Endothelial cell of umbilical vein (primary cell): ENCODE measurements at regions of chr17 and their contacts with region 1.

Region 1: GRCh38 chr17:42517516-42517915 is 18.5 kb upstream of the NAGLU start:
- DNase-seq: peak; percentile 90
- H3K4me3 ChIP-seq: no peak overlapping the region
- H3K27ac ChIP-seq: peak overlapping the region; percentile 100
- H3K4me1 ChIP-seq: peaks cover 51% of the 10 kb centered on the region
- H3K27me3 ChIP-seq: no peaks in the 10 kb centered on the region
- CTCF ChIP-seq: peak; percentile 92 to 98
- POLR2A ChIP-seq: peak; percentile 54

Region 2: GRCh38 chr17:42312285-42313130 is 205.0 kb before region 1 on chr17:
- CTCF ChIA-PET with region 1: interaction called, 190 read pairs
- POLR2A ChIA-PET with region 1: interaction called, 5 read pairs
- dilution Hi-C with region 1: no loop called
- intact Hi-C with region 1: loop called (anchors 1 kb)
- DNase-seq: peak; percentile 85
- H3K4me3 ChIP-seq: no peak overlapping the region
- H3K27ac ChIP-seq: no peak overlapping the region
- H3K4me1 ChIP-seq: peaks cover 43% of the 10 kb centered on the region
- H3K27me3 ChIP-seq: no peaks in the 10 kb centered on the region
- CTCF ChIP-seq: peak; percentile 67 to 88
- POLR2A ChIP-seq: no peak

Region 3: GRCh38 chr17:42337442-42337841 is 180.1 kb before region 1 on chr17:
- CTCF ChIA-PET with region 1: interaction called, 9 read pairs
- POLR2A ChIA-PET with region 1: no interaction called
- dilution Hi-C with region 1: loop called (anchors 25 kb)
- intact Hi-C with region 1: no loop called
- DNase-seq: no peak
- H3K4me3 ChIP-seq: no peak overlapping the region
- H3K27ac ChIP-seq: no peak overlapping the region
- H3K4me1 ChIP-seq: peaks cover 14% of the 10 kb centered on the region
- H3K27me3 ChIP-seq: no peaks in the 10 kb centered on the region
- CTCF ChIP-seq: no peak
- POLR2A ChIP-seq: no peak

Region 4: DNA sequence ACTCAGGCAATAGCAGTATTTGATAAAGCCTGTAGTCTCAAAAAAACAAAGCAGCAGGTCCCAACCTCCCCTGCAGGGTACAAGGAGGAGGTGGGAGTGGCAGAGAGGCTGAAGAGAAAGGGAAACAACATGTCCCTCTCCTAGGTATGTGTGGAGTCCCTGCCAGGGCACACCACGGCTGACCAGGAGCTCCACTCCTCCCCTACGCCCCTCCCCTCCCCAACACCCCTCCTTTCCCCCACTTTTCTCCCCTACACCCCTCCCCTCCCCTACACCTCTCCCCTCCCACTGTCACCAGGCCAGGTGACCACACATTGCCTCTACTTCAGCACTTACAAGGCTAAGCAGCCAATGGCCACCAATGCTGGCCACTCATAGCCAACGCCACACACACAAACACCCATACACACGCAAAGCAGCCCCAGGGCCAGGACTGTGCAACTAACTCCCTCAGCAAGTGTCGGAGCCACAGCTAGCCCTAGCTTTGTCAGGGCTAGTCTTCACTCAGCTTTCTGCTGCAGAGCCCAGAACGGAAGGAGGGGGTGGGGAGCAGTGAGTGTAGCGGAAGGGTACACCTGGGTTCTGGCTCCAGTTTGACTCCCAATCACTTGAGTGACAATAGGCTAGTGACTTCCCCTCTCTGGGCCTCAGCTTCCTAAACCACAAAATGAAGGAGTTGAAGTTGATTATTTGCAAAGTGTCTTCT is 102.7 kb before region 1 on chr17:
- CTCF ChIA-PET with region 1: interaction called, 81 read pairs
- POLR2A ChIA-PET with region 1: interaction called, 16 read pairs
- dilution Hi-C with region 1: no loop called
- intact Hi-C with region 1: no loop called
- DNase-seq: peak; percentile 24
- H3K4me3 ChIP-seq: no peak overlapping the region
- H3K27ac ChIP-seq: peak overlapping the region; percentile 24
- H3K4me1 ChIP-seq: peaks cover 62% of the 10 kb centered on the region
- H3K27me3 ChIP-seq: no peaks in the 10 kb centered on the region
- CTCF ChIP-seq: no peak
- POLR2A ChIP-seq: no peak

Region 5: DNA sequence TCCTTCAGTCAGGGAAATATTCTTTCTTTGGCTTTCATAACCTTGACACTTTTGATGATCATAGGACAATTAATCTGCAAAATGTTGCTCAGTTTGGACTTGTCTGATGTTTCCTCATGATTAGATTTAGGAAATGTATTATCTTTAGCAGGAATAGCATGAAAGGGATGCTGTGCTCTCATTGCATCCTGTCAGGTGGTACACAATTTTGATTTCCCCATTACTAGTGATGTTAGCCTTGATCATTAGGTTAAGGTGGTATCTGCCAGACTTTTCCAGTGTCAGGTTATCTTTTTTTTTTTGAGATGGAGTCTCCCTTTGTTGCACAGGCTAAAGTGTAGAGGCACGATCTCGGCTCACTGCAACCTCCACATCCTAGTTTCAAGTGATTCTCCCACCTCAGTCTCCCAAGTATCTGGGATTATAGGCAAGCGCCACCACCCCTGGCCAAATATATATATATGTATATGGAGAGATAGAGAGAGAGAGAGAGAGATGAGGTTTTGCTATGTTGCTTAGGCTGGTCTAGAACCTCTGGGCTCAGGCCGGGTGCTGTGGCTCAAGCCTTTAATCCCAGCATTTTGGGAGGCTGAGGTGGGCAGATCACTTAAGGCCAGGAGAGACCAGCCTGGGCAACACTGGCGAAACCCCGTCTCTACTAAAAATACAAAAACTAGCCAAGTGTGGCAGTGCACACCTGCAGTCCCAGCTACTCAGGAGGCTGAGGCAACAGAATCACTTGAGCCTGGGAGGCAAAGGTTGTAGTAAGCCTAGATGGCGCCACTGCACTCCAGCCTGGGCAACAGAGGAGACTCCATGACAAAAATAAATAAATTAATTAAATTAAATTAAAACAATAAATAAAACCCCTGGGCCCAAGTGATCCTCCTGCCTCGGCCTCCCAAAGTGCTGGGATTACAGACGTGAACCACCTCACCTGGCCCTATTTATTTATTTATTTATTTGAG is 78.6 kb before region 1 on chr17:
- CTCF ChIA-PET with region 1: interaction called, 14 read pairs
- POLR2A ChIA-PET with region 1: no interaction called
- dilution Hi-C with region 1: no loop called
- intact Hi-C with region 1: no loop called
- DNase-seq: peak; percentile 40
- H3K4me3 ChIP-seq: no peak overlapping the region
- H3K27ac ChIP-seq: no peak overlapping the region
- H3K4me1 ChIP-seq: peaks cover 8% of the 10 kb centered on the region
- H3K27me3 ChIP-seq: no peaks in the 10 kb centered on the region
- CTCF ChIP-seq: peak; percentile 26 to 58
- POLR2A ChIP-seq: no peak

Region 6: DNA sequence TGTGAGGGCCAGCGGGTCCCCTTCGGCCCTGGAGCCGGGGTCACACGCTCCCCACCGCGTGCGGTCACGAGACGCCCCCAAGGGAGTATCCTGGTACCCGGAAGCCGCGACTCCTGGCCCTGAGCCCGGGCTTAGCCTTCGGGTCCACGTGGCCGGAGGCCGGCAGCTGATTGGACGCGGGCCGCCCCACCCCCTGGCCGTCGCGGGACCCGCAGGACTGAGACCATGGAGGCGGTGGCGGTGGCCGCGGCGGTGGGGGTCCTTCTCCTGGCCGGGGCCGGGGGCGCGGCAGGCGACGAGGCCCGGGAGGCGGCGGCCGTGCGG is 18.5 kb after region 1 on chr17 and contains the start of gene NAGLU:
- CTCF ChIA-PET with region 1: interaction called, 13 read pairs
- POLR2A ChIA-PET with region 1: interaction called, 5 read pairs
- dilution Hi-C with region 1: no loop called
- intact Hi-C with region 1: loop called (anchors 1 kb)
- DNase-seq: peak; percentile 83
- H3K4me3 ChIP-seq: peak within 1 kb of the TSS; percentile 29 to 80 (median 49)
- H3K27ac ChIP-seq: peak within 1 kb of the TSS; percentile 79
- H3K4me1 ChIP-seq: peaks cover 19% of the 10 kb centered on the region
- H3K27me3 ChIP-seq: no peaks in the 10 kb centered on the region
- CTCF ChIP-seq: no peak
- POLR2A ChIP-seq: peak; percentile 64
- total RNA-seq, gene NAGLU: 40.2 and 50.2 TPM in 2 replicates